Activated naive CD4-positive, alpha-beta T cell treated with anti-CD3 and anti-CD28 coated beads for 36 hours (primary cell): ENCODE measurements at regions of chr9 and their contacts with region 1.

Region 1: GRCh38 chr9:109972026-109972882 is 192.3 kb downstream of the PALM2AKAP2 start:
- DNase-seq: peak; percentile 56
- H3K4me3 Mint-ChIP-seq: no peak overlapping the region
- H3K27ac Mint-ChIP-seq: peak overlapping the region; percentile 4
- H3K4me1 Mint-ChIP-seq: peaks cover 86% of the 10 kb centered on the region
- H3K27me3 Mint-ChIP-seq: no peaks in the 10 kb centered on the region

Region 2: DNA sequence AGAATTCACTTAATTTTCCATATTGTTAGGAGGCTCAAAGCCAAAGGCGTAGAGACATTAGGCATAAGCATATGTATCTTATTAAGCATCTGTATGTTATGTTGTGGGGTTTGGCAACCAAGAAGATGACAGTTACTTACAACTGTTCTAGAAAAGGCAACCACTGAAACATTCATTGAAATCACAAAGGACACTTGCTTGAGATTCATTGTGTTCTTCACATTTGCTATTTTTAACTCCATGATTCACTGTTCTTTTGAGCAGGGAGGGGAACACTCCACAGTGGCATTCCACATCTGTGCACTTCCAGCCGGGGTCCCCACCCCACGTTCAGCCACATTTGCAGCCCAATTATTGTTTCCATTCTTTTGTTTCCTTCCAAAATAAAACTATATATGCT is 85.2 kb before region 1 on chr9:
- CTCF ChIA-PET with region 1: interaction called, 4 read pairs
- intact Hi-C with region 1: loop called (anchors 1 kb)
- DNase-seq: no peak
- H3K4me3 Mint-ChIP-seq: no peak overlapping the region
- H3K27ac Mint-ChIP-seq: peak overlapping the region; percentile 96
- H3K4me1 Mint-ChIP-seq: peaks cover 61% of the 10 kb centered on the region
- H3K27me3 Mint-ChIP-seq: no peaks in the 10 kb centered on the region

Region 3: GRCh38 chr9:109918339-109919163 is 53.7 kb before region 1 on chr9:
- CTCF ChIA-PET with region 1: interaction called, 3 read pairs
- intact Hi-C with region 1: loop called (anchors 1 kb)
- DNase-seq: peak; percentile 64
- H3K4me3 Mint-ChIP-seq: peak overlapping the region; percentile 44
- H3K27ac Mint-ChIP-seq: peak overlapping the region; percentile 92
- H3K4me1 Mint-ChIP-seq: peaks cover 24% of the 10 kb centered on the region
- H3K27me3 Mint-ChIP-seq: no peaks in the 10 kb centered on the region

Region 4: DNA sequence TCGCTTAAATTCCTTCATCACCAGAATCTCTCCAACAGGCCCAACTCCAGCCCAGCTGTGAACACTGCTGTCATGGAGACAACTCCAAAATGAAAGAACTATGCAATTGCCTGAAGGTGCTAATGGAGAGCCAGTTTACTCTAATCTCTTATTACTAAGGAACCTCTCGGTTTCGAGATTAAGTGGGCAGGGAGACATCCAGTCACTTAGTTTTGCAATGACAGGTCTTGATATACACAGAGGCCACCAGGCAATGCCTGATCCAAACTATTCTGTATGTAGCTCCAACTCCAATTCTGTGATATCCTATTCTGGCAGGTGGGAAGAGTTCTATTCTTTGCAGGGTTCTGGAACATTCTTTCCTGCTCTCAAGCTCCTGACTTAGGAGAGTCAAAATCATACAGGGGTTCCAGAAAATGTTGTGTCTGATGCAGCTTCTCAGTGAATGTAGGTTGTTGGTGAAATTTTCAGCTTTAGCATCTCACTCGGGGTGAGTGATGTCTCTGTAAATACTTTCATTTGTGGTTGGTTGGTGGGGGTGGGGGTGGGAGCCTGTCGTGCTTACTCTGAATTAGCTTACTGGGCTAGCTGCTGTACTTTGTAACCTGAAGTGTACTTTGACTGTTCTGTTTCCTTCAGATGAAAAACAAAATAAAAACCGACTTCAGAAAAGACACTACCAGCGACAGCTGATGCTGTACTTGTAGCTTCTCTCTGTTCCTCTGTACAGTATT is 21.4 kb before region 1 on chr9:
- CTCF ChIA-PET with region 1: interaction called, 4 read pairs
- intact Hi-C with region 1: loop called (anchors 1 kb)
- DNase-seq: peak; percentile 58
- H3K4me3 Mint-ChIP-seq: no peak overlapping the region
- H3K27ac Mint-ChIP-seq: peak overlapping the region; percentile 67
- H3K4me1 Mint-ChIP-seq: peaks cover 23% of the 10 kb centered on the region
- H3K27me3 Mint-ChIP-seq: no peaks in the 10 kb centered on the region

Region 5: GRCh38 chr9:110015759-110016158 is 43.5 kb after region 1 on chr9:
- CTCF ChIA-PET with region 1: no interaction called
- intact Hi-C with region 1: no loop called
- DNase-seq: peak; percentile 35
- H3K4me3 Mint-ChIP-seq: no peak overlapping the region
- H3K27ac Mint-ChIP-seq: no peak overlapping the region
- H3K4me1 Mint-ChIP-seq: peaks cover 3% of the 10 kb centered on the region
- H3K27me3 Mint-ChIP-seq: no peaks in the 10 kb centered on the region

Region 6: GRCh38 chr9:110048403-110048975 is 76.2 kb after region 1 on chr9:
- CTCF ChIA-PET with region 1: interaction called, 3 read pairs
- intact Hi-C with region 1: loop called (anchors 1 kb)
- DNase-seq: peak; percentile 86
- H3K4me3 Mint-ChIP-seq: peak overlapping the region; percentile 84
- H3K27ac Mint-ChIP-seq: no peak overlapping the region
- H3K4me1 Mint-ChIP-seq: peaks cover 33% of the 10 kb centered on the region
- H3K27me3 Mint-ChIP-seq: peaks cover 12% of the 10 kb centered on the region

Region 7: DNA sequence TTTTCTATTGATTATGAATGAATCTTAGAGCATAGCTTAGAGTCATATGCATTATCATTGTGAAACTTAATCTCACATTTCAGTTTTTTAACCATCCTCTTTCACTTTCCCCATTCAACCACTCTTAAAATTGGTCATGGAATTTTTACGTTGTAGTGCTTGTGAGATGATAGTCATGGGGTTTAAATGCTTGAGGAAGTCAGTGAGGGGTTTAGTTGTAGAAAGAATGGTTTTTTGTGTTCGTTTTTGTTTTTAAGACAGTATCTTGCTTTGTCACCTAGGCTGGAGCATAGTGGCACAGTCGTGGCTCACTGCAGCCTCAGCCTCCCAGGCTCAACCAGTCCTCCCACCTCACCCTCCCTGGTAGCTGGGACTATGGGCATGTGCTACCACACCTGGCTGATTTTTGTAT is 1944.0 kb after region 1 on chr9:
- CTCF ChIA-PET with region 1: no interaction called
- intact Hi-C with region 1: loop called (anchors 5 kb)
- DNase-seq: peak; percentile 45
- H3K4me3 Mint-ChIP-seq: no peak overlapping the region
- H3K27ac Mint-ChIP-seq: peak overlapping the region; percentile 81
- H3K4me1 Mint-ChIP-seq: peaks cover 53% of the 10 kb centered on the region
- H3K27me3 Mint-ChIP-seq: no peaks in the 10 kb centered on the region